ENCODE measurements at regions of chr7 and their contacts with region 1.

Region 1: GRCh38 chr7:133344275-133344674 is 91.4 kb downstream of the EXOC4 start:
- DNase-seq: no peak
- ATAC-seq: no peak
- H3K4me3 ChIP-seq: no peak overlapping the region
- H3K27ac ChIP-seq: no peak overlapping the region
- H3K4me1 ChIP-seq: no peaks in the 10 kb centered on the region
- H3K27me3 ChIP-seq: no peaks in the 10 kb centered on the region
- CTCF ChIP-seq: peak; percentile 27 to 57 (median 35); a peak in 4 of 6 replicates
- POLR2A ChIP-seq: no peak
- RAD21 ChIP-seq: peak; percentile 53

Region 2: GRCh38 chr7:132318352-132319318 is 1025.6 kb before region 1 on chr7:
- CTCF ChIA-PET with region 1: no interaction called
- POLR2A ChIA-PET with region 1: no interaction called
- RAD21 ChIA-PET with region 1: no interaction called
- intact Hi-C with region 1: loop called (anchors 2 kb)
- DNase-seq: peak; percentile 68
- ATAC-seq: peak; percentile 99
- H3K4me3 ChIP-seq: no peak overlapping the region
- H3K27ac ChIP-seq: no peak overlapping the region
- H3K4me1 ChIP-seq: 0 out of 4 replicates have a peak, but pooled peaks cover 0 to 3% of the 10 kb centered on the region in 2 experiments
- H3K27me3 ChIP-seq: peaks cover 52% of the 10 kb centered on the region
- CTCF ChIP-seq: peak; percentile 74 to 82 (median 75)
- POLR2A ChIP-seq: no peak
- RAD21 ChIP-seq: peak; percentile 82

Region 3: GRCh38 chr7:133394369-133394768 is 50.1 kb after region 1 on chr7:
- CTCF ChIA-PET with region 1: no interaction called
- POLR2A ChIA-PET with region 1: no interaction called
- RAD21 ChIA-PET with region 1: no interaction called
- intact Hi-C with region 1: no loop called
- DNase-seq: no peak
- ATAC-seq: no peak
- H3K4me3 ChIP-seq: no peak overlapping the region
- H3K27ac ChIP-seq: no peak overlapping the region
- H3K4me1 ChIP-seq: no peaks in the 10 kb centered on the region
- H3K27me3 ChIP-seq: no peaks in the 10 kb centered on the region
- CTCF ChIP-seq: no peak
- POLR2A ChIP-seq: no peak
- RAD21 ChIP-seq: no peak

Measured in HCT116 (cell line).